ENCODE measurements at regions of chr20 and their contacts with region 1.

Region 1: GRCh38 chr20:36605399-36606157 is at the start of gene RAB5IF:
- DNase-seq: peak; percentile 100
- H3K4me3 Mint-ChIP-seq: peak within 1 kb of the TSS; percentile 100
- H3K27ac Mint-ChIP-seq: peak within 1 kb of the TSS; percentile 98
- H3K4me1 Mint-ChIP-seq: peaks cover 21% of the 10 kb centered on the region
- H3K27me3 Mint-ChIP-seq: no peaks in the 10 kb centered on the region
- total RNA-seq, gene RAB5IF: 114 and 122 TPM in 2 replicates

Region 2: GRCh38 chr20:36506253-36506652 is 99.3 kb before region 1 on chr20:
- intact Hi-C with region 1: loop called (anchors 1 kb)
- DNase-seq: peak; percentile 66
- H3K4me3 Mint-ChIP-seq: no peak overlapping the region
- H3K27ac Mint-ChIP-seq: no peak overlapping the region
- H3K4me1 Mint-ChIP-seq: peaks cover 10% of the 10 kb centered on the region
- H3K27me3 Mint-ChIP-seq: no peaks in the 10 kb centered on the region

Region 3: GRCh38 chr20:36573103-36573794 is 32.3 kb before region 1 on chr20 and contains the start of gene TGIF2:
- intact Hi-C with region 1: loop called (anchors 1 kb)
- DNase-seq: peak; percentile 95
- H3K4me3 Mint-ChIP-seq: peak within 1 kb of the TSS; percentile 93
- H3K27ac Mint-ChIP-seq: peak within 1 kb of the TSS; percentile 99
- H3K4me1 Mint-ChIP-seq: peaks cover 34% of the 10 kb centered on the region
- H3K27me3 Mint-ChIP-seq: no peaks in the 10 kb centered on the region
- total RNA-seq, gene TGIF2: 55.2 and 55.7 TPM in 2 replicates

Region 4: DNA sequence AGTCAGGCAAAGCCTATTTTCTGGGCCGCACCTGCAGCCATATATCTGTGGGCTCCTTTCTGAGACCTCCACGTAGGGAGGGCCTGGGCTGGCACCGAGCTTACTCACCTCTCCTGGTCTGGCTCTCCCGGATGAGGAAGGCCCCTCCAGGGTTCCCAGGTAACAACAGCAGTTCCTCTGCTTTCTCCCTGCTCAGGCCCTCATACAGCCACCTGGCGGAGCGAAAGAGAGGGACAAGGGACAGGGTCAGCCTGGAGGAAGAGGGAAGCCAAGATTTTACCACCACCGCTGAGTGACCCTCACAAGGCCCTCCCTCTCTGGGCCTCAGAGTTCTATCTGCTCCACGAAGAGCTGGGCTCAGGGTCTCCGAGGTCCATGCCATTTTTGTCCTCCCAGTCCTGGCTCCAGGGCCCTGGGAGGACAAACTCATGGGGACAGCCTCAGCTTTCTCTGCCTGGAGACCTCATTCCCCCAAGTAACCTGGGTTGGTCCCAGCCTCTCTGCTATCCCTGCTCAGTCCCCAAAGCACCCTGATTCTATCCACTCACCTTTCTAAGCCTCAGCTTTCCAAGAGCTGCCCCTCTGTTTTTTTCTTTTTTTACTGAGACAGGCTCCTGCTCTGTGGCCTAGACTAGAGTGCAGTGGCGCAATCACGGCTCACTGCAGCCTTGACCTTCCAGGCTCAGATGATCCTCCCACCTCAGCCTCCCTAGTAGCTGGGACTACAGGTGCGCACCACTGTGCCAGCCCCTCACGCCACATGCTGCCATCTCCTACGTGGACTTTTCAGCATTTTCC is 27.1 kb after region 1 on chr20:
- intact Hi-C with region 1: no loop called
- DNase-seq: no peak
- H3K4me3 Mint-ChIP-seq: no peak overlapping the region
- H3K27ac Mint-ChIP-seq: peak overlapping the region; percentile 65
- H3K4me1 Mint-ChIP-seq: peaks cover 31% of the 10 kb centered on the region
- H3K27me3 Mint-ChIP-seq: no peaks in the 10 kb centered on the region

Region 5: GRCh38 chr20:36645998-36646397 is 40.4 kb after region 1 on chr20 and contains the start of gene SLA2:
- intact Hi-C with region 1: loop called (anchors 1 kb)
- DNase-seq: peak; percentile 91
- H3K4me3 Mint-ChIP-seq: peak within 1 kb of the TSS; percentile 98
- H3K27ac Mint-ChIP-seq: peak within 1 kb of the TSS; percentile 98
- H3K4me1 Mint-ChIP-seq: peaks cover 52% of the 10 kb centered on the region
- H3K27me3 Mint-ChIP-seq: no peaks in the 10 kb centered on the region
- total RNA-seq, gene SLA2: 59.0 and 59.6 TPM in 2 replicates

Region 6: DNA sequence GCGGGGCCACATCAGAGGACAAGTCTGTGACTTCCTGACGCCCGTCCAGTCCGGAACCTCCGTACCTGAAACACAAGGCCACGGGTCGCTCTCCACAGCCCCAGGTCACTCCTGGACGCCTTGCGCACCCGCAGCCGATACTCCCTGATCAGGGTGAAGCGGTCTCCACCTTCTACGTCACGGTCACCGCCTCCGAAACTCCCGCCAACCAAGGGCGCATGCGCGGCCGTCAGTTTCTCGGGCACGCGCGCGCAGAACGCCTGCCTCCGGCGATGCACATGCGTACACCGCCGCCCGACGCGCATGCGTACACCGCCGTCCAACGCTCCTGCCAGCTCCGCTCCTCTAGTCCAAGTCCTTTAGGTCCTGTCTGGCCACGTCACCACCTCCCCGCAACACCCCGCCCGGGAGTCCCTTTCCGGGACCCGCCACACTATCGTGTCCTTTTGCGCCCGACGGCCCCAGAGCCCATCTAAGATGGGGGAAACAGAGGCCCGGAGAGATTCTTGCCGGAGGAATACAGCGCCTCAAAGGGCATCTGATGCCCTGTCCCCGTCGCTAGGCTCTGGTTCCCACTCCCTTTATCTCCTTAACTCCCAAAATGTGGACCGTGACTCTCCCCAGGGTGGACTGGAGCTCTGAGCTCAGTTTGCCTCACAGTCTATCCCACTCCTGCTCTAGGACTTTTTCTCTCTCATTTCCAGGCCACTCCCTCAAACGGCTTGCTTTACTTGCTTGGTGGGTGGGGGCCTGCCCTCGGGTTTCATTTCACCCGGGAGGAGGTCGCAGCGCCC is 168.2 kb after region 1 on chr20 and contains the start of gene DSN1:
- intact Hi-C with region 1: loop called (anchors 5 kb)
- DNase-seq: peak; percentile 100
- H3K4me3 Mint-ChIP-seq: peak within 1 kb of the TSS; percentile 87
- H3K27ac Mint-ChIP-seq: peak within 1 kb of the TSS; percentile 94
- H3K4me1 Mint-ChIP-seq: peaks cover 36% of the 10 kb centered on the region
- H3K27me3 Mint-ChIP-seq: peaks cover 2% of the 10 kb centered on the region
- total RNA-seq, gene DSN1: 23.8 and 24.5 TPM in 2 replicates

Measured in activated CD4-positive, alpha-beta T cell treated with anti-CD3 and anti-CD28 coated beads, Interleukin-2, amount 10 ng/mL, durations not matched to agents 24 days and 14 days (primary cell).